Activated naive CD4-positive, alpha-beta T cell treated with anti-CD3 and anti-CD28 coated beads, Interleukin-2, amount 10 ng/mL, durations not matched to agents 7 days and 5 days (primary cell): ENCODE measurements at regions of chr7 and their contacts with region 1.

Region 1: DNA sequence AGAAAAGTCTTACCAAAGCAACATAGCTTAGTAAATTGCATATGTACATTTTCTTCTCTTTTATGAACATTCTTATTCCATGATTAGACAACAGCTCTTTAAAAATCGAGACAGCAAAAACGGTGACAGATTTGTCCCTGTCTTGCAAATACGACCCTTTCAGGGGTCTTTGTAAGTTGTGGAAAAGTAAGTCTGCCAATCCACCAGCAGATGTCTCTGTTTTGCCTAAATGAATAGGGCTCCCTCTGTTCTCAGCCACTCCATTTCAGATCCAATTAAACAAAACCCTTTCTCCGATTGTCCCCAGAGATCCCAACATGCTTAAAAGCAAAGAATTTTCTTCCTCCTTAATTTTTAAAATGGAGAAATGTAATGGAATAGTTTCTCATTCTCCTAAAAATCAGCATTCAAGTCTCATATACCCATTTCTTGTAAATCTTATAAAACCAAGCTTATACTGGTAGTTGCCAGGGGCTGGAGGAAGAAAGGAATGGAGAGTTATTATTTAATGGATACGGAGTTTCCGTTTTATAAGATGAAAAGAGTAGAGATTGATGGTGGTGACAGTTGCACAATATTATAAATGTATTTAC is 61.0 kb upstream of the NFE2L3 start:
- DNase-seq: no peak
- H3K4me3 Mint-ChIP-seq: no peak overlapping the region
- H3K27ac Mint-ChIP-seq: peak overlapping the region; percentile 39
- H3K4me1 Mint-ChIP-seq: peaks cover 28% of the 10 kb centered on the region
- H3K27me3 Mint-ChIP-seq: peaks cover 8% of the 10 kb centered on the region

Region 2: GRCh38 chr7:26078437-26079336 is 12.3 kb before region 1 on chr7:
- CTCF ChIA-PET with region 1: interaction called, 26 read pairs
- DNase-seq: peak; percentile 86
- H3K4me3 Mint-ChIP-seq: no peak overlapping the region
- H3K27ac Mint-ChIP-seq: no peak overlapping the region
- H3K4me1 Mint-ChIP-seq: peaks cover 7% of the 10 kb centered on the region
- H3K27me3 Mint-ChIP-seq: peaks cover 91% of the 10 kb centered on the region

Region 3: GRCh38 chr7:26151953-26152781 is 61.1 kb after region 1 on chr7 and contains the start of gene NFE2L3:
- CTCF ChIA-PET with region 1: interaction called, 29 read pairs
- DNase-seq: peak; percentile 88
- H3K4me3 Mint-ChIP-seq: peak within 1 kb of the TSS; percentile 96
- H3K27ac Mint-ChIP-seq: peak within 1 kb of the TSS; percentile 95
- H3K4me1 Mint-ChIP-seq: peaks cover 59% of the 10 kb centered on the region
- H3K27me3 Mint-ChIP-seq: peaks cover 13% of the 10 kb centered on the region

Region 4: DNA sequence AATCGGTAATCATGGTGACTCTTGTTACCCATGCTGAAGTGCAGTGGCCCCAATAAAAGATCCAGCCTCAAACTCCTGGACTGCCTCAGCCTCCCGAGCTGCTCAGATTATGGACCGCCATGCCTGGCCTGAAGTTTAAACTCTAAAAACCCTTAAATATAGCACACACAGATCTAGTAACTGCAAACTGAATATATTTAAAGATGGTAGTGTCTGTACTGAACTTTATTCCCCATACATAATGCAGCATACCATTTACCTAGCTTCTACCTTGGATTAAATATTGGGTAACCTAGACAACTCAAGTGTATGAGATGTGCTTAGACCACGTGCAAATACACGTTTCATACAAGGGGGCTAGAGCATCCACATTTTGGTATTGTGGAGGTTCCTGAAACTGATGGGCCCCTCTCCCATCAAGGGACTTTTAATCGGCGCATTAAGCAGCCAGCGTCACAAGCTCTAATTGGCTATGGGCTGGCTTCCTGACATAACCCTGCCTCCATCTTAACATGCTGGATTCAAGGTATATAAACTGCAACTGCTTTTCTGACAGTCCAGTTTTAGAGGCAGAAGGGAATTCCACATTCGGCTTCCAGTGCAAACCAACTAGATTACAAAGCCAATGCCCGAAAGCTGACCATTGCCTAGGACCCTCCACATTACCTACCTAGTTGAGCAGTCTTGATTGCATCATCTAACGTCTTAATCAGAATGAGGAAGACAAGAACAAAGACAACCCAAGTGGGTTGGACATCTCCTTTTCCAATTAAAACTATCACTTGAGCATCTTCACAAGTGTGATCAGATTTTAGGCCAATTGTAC is 96.6 kb after region 1 on chr7:
- CTCF ChIA-PET with region 1: interaction called, 41 read pairs
- DNase-seq: no peak
- H3K4me3 Mint-ChIP-seq: no peak overlapping the region
- H3K27ac Mint-ChIP-seq: peak overlapping the region; percentile 74
- H3K4me1 Mint-ChIP-seq: peaks cover 79% of the 10 kb centered on the region
- H3K27me3 Mint-ChIP-seq: no peaks in the 10 kb centered on the region

Region 5: GRCh38 chr7:26284995-26285632 is 194.1 kb after region 1 on chr7:
- CTCF ChIA-PET with region 1: interaction called, 18 read pairs
- DNase-seq: no peak
- H3K4me3 Mint-ChIP-seq: no peak overlapping the region
- H3K27ac Mint-ChIP-seq: no peak overlapping the region
- H3K4me1 Mint-ChIP-seq: peaks cover 2% of the 10 kb centered on the region
- H3K27me3 Mint-ChIP-seq: peaks cover 21% of the 10 kb centered on the region